Activated naive CD4-positive, alpha-beta T cell treated with anti-CD3 and anti-CD28 coated beads for 36 hours (primary cell): ENCODE measurements at regions of chr22 and their contacts with region 1.

Region 1: GRCh38 chr22:45863981-45864751 is 112.8 kb downstream of the WNT7B start:
- DNase-seq: peak; percentile 80
- H3K4me3 Mint-ChIP-seq: no peak overlapping the region
- H3K27ac Mint-ChIP-seq: no peak overlapping the region
- H3K4me1 Mint-ChIP-seq: peaks cover 4% of the 10 kb centered on the region
- H3K27me3 Mint-ChIP-seq: peaks cover 36% of the 10 kb centered on the region

Region 2: DNA sequence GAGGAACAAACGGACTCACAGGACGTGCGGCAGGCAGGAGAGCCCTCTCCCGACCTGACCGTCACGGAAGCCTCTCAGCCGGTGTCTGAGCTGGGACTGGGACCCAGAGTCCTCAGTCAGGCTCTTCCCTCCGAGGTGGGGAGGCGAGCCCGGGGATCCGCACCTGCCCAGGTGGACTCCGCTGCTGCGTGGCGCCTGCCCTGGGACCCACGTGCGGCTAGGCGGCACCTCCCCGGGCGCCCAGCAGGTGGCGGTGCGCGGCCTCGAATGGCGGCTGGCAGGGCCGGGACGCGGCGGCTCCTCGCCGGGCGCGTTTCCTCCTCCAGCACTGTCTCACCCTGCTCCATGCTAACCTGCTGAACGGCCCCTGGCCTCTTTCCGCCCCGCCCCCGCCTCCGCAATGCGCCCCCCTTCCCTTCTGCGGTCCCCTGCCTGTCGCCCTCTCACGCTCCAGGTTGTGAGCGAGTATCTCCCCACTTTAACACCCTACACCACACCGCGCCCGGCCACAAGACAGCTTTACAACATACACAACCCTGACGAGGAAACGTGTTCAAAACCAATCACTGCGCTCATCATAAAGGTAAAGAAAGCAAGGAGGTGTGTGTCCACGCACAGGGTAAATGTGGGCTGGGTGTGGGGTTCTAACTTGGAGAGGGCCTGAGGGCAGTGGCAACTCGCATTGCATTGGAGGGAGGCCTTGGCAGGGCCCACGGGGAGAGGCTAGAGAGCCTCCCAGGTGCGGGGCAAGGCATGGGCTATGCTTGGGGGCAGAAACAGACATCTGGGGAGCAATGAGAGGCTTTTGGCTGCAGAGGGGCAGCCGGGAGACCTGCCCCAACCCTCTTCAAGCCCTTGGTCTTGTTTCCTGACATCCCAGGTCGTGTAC is 218.4 kb before region 1 on chr22:
- CTCF ChIA-PET with region 1: interaction called, 22 read pairs
- intact Hi-C with region 1: loop called (anchors 2 kb)
- DNase-seq: peak; percentile 79
- H3K4me3 Mint-ChIP-seq: no peak overlapping the region
- H3K27ac Mint-ChIP-seq: no peak overlapping the region
- H3K4me1 Mint-ChIP-seq: no peaks in the 10 kb centered on the region
- H3K27me3 Mint-ChIP-seq: peaks cover 32% of the 10 kb centered on the region

Region 3: GRCh38 chr22:45671768-45672563 is 192.2 kb before region 1 on chr22 and contains the start of gene ATXN10:
- CTCF ChIA-PET with region 1: no interaction called
- intact Hi-C with region 1: no loop called
- DNase-seq: peak; percentile 76
- H3K4me3 Mint-ChIP-seq: peak within 1 kb of the TSS; percentile 89
- H3K27ac Mint-ChIP-seq: peak within 1 kb of the TSS; percentile 75
- H3K4me1 Mint-ChIP-seq: peaks cover 33% of the 10 kb centered on the region
- H3K27me3 Mint-ChIP-seq: peaks cover 3% of the 10 kb centered on the region
- total RNA-seq, gene ATXN10: 79.8 to 83.7 TPM

Region 4: GRCh38 chr22:45845076-45845487 is 19.1 kb before region 1 on chr22:
- CTCF ChIA-PET with region 1: interaction called, 11 read pairs
- intact Hi-C with region 1: no loop called
- DNase-seq: no peak
- H3K4me3 Mint-ChIP-seq: no peak overlapping the region
- H3K27ac Mint-ChIP-seq: no peak overlapping the region
- H3K4me1 Mint-ChIP-seq: no peaks in the 10 kb centered on the region
- H3K27me3 Mint-ChIP-seq: no peaks in the 10 kb centered on the region

Region 5: DNA sequence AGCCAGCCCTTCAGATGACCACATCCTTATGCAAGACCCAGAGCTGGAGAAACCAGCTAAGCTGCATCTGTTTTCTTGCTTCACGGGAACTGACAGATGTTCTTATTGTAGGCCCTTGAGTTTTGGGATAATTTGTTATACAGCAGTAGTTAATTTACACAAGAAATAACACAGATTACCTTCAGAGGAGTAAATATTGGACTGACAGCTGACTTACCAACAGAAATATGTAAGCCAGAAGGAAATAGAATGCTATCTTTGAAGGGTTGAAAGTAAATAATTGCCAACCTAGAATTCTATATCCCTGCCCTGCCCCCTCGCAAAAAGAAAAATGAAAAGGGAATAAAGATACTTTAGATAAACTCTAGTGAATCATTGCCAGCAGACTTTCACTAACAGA is 11.3 kb before region 1 on chr22:
- CTCF ChIA-PET with region 1: interaction called, 12 read pairs
- intact Hi-C with region 1: no loop called
- DNase-seq: no peak
- H3K4me3 Mint-ChIP-seq: no peak overlapping the region
- H3K27ac Mint-ChIP-seq: no peak overlapping the region
- H3K4me1 Mint-ChIP-seq: no peaks in the 10 kb centered on the region
- H3K27me3 Mint-ChIP-seq: no peaks in the 10 kb centered on the region